Caco-2 (cell line): ENCODE measurements at regions of chr13 and their contacts with region 1.

Region 1: DNA sequence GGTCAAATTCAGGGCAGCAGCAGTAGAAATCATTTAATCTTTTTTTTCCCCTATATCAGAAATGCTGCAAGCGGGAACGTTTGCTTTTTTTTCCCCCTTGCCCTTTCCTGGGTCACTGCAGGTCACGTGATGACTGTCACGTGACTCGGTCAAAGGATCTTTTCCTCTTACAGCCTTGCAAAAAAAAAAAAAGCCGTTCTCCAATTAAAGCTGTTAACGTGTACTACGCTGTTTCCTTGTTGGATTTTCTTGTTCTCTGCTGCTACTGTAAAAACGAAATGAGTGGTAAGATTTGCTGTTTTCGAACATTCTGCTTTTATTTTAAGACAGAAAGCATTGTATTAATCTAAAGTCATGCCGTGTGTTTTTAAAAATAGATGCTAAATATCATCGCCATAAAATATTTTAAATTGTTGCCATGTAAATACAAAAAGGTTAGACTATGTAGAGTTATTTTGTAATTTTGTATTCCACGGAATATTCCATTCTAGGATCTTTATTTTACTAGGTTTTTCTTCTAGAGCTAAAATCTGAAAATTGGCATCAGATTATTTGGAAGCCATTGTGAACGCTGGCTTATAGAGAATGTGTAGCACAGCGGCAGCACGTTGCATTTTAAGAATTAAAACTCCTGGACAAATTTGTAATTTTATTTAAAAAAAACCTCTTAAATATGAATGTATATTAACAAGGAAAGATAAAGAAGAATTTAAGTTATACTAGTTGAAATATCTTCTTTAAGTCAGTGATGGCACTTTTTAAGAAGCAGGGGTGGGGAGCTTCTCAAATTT is 109.8 kb upstream of the MLNR start:
- DNase-seq: peak; percentile 81 to 88
- H3K4me3 ChIP-seq: peak overlapping the region; percentile 52
- H3K4me3 Mint-ChIP-seq: peak overlapping the region; percentile 74
- H3K27ac Mint-ChIP-seq: peak overlapping the region; percentile 43
- H3K4me1 ChIP-seq: peaks cover 13% of the 10 kb centered on the region; the same call in 1 of the 2 replicates
- H3K4me1 Mint-ChIP-seq: peaks cover 17% of the 10 kb centered on the region
- H3K27me3 ChIP-seq: no peaks in the 10 kb centered on the region
- H3K27me3 Mint-ChIP-seq: no peaks in the 10 kb centered on the region
- CTCF ChIP-seq: no peak

Region 2: DNA sequence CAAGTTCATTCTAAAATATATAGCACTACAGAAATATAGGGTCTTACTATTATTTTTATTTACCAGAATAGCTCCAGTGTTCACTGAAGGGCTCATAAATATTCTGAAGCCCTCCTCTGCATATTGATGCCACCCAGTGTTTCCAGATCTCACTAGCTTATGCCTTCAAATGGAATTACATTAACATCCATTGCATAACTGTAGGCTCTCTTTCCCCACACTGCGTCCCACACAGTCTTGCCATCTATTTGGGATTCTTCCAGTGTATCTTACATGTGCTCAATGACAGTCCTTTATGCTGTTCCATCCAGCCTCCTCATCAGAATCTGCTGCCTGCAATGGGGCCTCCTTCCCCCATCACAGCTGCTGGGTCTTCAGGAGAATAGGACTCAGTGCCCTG is 319.4 kb before region 1 on chr13:
- CTCF ChIA-PET with region 1: no interaction called
- POLR2A ChIA-PET with region 1: no interaction called
- intact Hi-C with region 1: no loop called
- DNase-seq: no peak
- H3K4me3 ChIP-seq: no peak overlapping the region
- H3K4me3 Mint-ChIP-seq: no peak overlapping the region
- H3K27ac Mint-ChIP-seq: no peak overlapping the region
- H3K4me1 ChIP-seq: no peaks in the 10 kb centered on the region
- H3K4me1 Mint-ChIP-seq: no peaks in the 10 kb centered on the region
- H3K27me3 ChIP-seq: no peaks in the 10 kb centered on the region; the same call in 1 of the 2 replicates
- H3K27me3 Mint-ChIP-seq: peaks cover 8% of the 10 kb centered on the region
- CTCF ChIP-seq: no peak

Region 3: GRCh38 chr13:48975856-48976575 is 134.3 kb before region 1 on chr13 and contains the start of gene FNDC3A:
- CTCF ChIA-PET with region 1: no interaction called
- POLR2A ChIA-PET with region 1: interaction called, 5 read pairs
- intact Hi-C with region 1: loop called (anchors 5 kb)
- DNase-seq: peak; percentile 78 to 86
- H3K4me3 ChIP-seq: peak within 1 kb of the TSS; percentile 71
- H3K4me3 Mint-ChIP-seq: peak within 1 kb of the TSS; percentile 98
- H3K27ac Mint-ChIP-seq: peak within 1 kb of the TSS; percentile 92
- H3K4me1 ChIP-seq: peaks cover 4% of the 10 kb centered on the region; the same call in 1 of the 2 replicates
- H3K4me1 Mint-ChIP-seq: peaks cover 17% of the 10 kb centered on the region
- H3K27me3 ChIP-seq: no peaks in the 10 kb centered on the region
- H3K27me3 Mint-ChIP-seq: peaks cover 4% of the 10 kb centered on the region
- CTCF ChIP-seq: peak in 1 of 2 experiments; percentile 22
- total RNA-seq, gene FNDC3A: 32.5 and 33.3 TPM in 2 replicates